ENCODE measurements at regions of chr1 and their contacts with region 1.

Region 1: GRCh38 chr1:205284343-205285144 is 37.0 kb downstream of the NUAK2 start:
- DNase-seq: peak; percentile 95
- H3K4me3 ChIP-seq: no peak overlapping the region
- H3K27ac ChIP-seq: peak overlapping the region; percentile 91
- H3K27me3 ChIP-seq: no peaks in the 10 kb centered on the region
- CTCF ChIP-seq: peak; percentile 17; the same call in 1 of the 2 replicates

Region 2: DNA sequence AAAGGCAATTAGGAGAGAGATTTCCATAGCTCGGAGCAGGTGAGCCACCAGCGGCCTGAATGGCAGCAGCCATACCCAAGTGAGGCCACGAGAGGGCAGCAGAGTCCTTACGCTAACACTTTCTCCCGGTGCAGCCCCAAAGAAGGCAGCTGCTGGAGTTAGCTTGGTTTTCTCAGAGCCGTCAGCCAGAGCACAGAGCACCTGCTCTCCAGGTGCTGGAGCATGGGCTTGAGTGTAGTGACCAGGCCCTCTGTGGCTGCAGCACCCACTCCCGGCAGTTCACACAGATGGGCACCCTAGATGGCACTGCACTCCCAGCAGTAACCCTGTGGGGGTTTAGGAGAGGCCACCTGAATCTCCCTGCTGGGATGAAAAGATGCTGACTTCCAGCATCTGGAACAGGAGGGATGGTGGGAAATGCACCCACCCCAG is 11.0 kb before region 1 on chr1:
- CTCF ChIA-PET with region 1: interaction called, 30 read pairs
- POLR2A ChIA-PET with region 1: interaction called, 5 read pairs
- DNase-seq: no peak
- H3K4me3 ChIP-seq: no peak overlapping the region
- H3K27ac ChIP-seq: no peak overlapping the region
- H3K27me3 ChIP-seq: no peaks in the 10 kb centered on the region
- CTCF ChIP-seq: peak; percentile 97

Region 3: GRCh38 chr1:205300886-205301821 is 16.6 kb after region 1 on chr1:
- CTCF ChIA-PET with region 1: interaction called, 3 read pairs
- POLR2A ChIA-PET with region 1: interaction called, 16 read pairs
- DNase-seq: peak; percentile 92
- H3K4me3 ChIP-seq: peak overlapping the region; percentile 25; the same call in 1 of the 2 replicates
- H3K27ac ChIP-seq: peak overlapping the region; percentile 100
- H3K27me3 ChIP-seq: no peaks in the 10 kb centered on the region
- CTCF ChIP-seq: no peak

Region 4: DNA sequence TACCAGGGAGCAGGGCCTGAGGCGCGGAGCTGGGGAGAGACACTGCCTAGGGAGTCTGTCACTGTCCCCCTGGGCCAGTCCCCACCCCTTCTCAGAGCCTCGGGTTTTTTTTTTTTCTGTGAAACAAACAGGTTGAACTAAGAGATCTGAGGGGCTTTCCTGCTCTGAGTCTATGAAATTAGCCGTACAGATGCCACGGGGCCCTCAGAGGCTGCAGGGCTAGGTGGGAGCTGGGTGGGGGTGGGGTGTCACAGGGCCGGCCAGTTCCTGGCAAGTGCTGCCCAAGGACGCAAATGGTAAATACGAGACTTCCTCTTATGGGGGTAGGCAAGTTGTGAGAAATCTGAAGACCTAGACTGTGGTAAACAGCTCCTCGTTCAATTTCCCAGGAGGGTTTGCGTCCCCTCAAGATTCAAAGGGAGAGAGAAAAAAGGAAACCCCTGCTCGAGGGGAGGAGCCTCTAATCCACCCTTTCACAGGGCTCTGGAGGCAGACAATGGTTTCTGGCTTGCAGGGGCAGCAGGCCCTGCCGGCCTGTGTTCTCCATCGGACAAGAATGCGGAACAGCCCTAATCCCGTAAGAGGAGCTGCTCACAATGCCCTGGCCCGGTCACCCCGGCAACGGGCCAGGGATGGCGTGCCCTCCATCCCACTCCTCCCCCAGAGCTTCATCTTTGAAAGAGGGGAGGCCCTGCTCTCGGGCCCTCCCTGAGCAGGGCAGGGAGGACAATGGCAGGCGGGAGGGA is 29.2 kb after region 1 on chr1:
- CTCF ChIA-PET with region 1: interaction called, 603 read pairs
- POLR2A ChIA-PET with region 1: interaction called, 15 read pairs
- DNase-seq: peak; percentile 66
- H3K4me3 ChIP-seq: peak overlapping the region; percentile 36
- H3K27ac ChIP-seq: peak overlapping the region; percentile 89
- H3K27me3 ChIP-seq: no peaks in the 10 kb centered on the region
- CTCF ChIP-seq: no peak